ENCODE measurements at regions of chr4 and their contacts with region 1.

Region 1: GRCh38 chr4:18536428-18536827 is 514.9 kb upstream of the LCORL start:
- DNase-seq: no peak
- ATAC-seq: no peak
- H3K4me3 ChIP-seq: no peak overlapping the region
- H3K27ac ChIP-seq: no peak overlapping the region
- H3K4me1 ChIP-seq: no peaks in the 10 kb centered on the region
- H3K27me3 ChIP-seq: no peaks in the 10 kb centered on the region
- CTCF ChIP-seq: no peak
- POLR2A ChIP-seq: no peak

Region 2: GRCh38 chr4:18479825-18480224 is 56.6 kb before region 1 on chr4:
- in situ Hi-C with region 1: loop called in 1 of 4 experiments (anchors 10 kb)
- intact Hi-C with region 1: no loop called
- DNase-seq: no peak
- ATAC-seq: no peak
- H3K4me3 ChIP-seq: no peak overlapping the region
- H3K27ac ChIP-seq: no peak overlapping the region
- H3K4me1 ChIP-seq: no peaks in the 10 kb centered on the region
- H3K27me3 ChIP-seq: no peaks in the 10 kb centered on the region
- CTCF ChIP-seq: no peak
- POLR2A ChIP-seq: no peak

Region 3: DNA sequence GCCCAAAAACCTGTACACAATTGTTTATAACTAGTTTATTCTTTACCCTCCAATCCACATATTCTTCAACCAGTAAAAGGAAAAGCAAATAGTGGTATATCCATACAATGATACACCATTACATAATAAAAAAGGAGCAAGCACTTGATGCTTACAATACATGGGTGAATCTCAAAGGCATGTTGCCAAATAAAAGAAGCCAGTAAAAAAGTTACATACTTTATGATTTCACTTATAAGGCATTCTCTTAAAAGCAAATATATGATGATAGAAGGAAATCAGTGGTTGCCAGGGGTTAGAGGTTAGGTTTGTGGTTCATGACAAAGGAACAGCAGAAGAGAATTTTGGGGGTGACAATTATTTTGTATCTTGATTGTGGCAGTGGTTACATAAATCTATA is 381.3 kb after region 1 on chr4:
- in situ Hi-C with region 1: no loop called
- intact Hi-C with region 1: no loop called
- DNase-seq: no peak
- ATAC-seq: no peak
- H3K4me3 ChIP-seq: no peak overlapping the region
- H3K27ac ChIP-seq: no peak overlapping the region
- H3K4me1 ChIP-seq: no peaks in the 10 kb centered on the region
- H3K27me3 ChIP-seq: no peaks in the 10 kb centered on the region
- CTCF ChIP-seq: no peak
- POLR2A ChIP-seq: no peak

Measured in gastrocnemius medialis (tissue), 4 donors.